ENCODE measurements at regions of chr15 and their contacts with region 1.

Region 1: GRCh38 chr15:28123408-28124023 is 24.4 kb upstream of the OCA2 start:
- DNase-seq: peak in 3 of 5 donors; percentile 20 to 39 (median 21)
- H3K4me3 ChIP-seq: no peak overlapping the region
- H3K4me3 Mint-ChIP-seq: no peak overlapping the region
- H3K27ac ChIP-seq: no peak overlapping the region
- H3K27ac Mint-ChIP-seq: peak overlapping the region in 1 of 7 donors; percentile 88
- H3K4me1 ChIP-seq: no peaks in the 10 kb centered on the region
- H3K4me1 Mint-ChIP-seq: peaks cover 2 to 14% (median 5%) of the 10 kb centered on the region in 4 donors
- H3K27me3 ChIP-seq: no peaks in the 10 kb centered on the region
- H3K27me3 Mint-ChIP-seq: no peaks in the 10 kb centered on the region

Region 2: DNA sequence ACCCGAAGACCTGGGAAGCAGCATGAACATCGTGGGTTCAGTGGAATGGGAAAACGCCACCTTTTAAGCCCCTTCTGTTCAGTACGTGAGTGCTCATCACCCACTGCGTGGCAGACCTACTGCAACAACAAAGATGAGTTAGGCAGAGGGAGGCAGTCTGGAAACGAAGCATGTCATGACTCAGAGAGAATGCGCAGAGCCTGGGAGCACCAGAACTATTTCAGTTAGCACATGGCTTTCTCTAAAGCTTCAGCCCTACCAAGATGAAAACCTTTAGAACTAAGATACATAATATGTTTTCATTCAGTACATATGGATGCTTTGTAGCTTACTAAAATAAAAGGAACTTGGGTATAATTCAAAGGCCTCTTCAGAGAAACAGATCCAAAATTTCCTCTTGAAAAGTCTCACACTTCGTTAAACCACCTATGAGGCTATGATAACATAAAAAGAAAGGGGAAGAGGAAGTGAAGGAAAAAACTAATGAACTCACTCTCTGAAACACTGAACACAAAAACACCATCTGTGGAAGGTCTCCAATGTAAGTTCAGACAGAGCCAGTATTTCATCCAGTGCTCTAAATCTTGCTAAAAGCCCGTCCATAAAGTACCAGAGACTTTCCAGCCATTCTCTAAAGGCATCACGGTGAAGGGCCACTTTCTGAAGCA is 164.5 kb before region 1 on chr15:
- CTCF ChIA-PET with region 1: no interaction called
- POLR2A ChIA-PET with region 1: no interaction called
- intact Hi-C with region 1: no loop called
- DNase-seq: no peak
- H3K4me3 ChIP-seq: no peak overlapping the region
- H3K4me3 Mint-ChIP-seq: no peak overlapping the region
- H3K27ac ChIP-seq: no peak overlapping the region
- H3K27ac Mint-ChIP-seq: no peak overlapping the region
- H3K4me1 ChIP-seq: no peaks in the 10 kb centered on the region
- H3K4me1 Mint-ChIP-seq: no peaks in the 10 kb centered on the region
- H3K27me3 ChIP-seq: no peaks in the 10 kb centered on the region
- H3K27me3 Mint-ChIP-seq: no peaks in the 10 kb centered on the region

Region 3: DNA sequence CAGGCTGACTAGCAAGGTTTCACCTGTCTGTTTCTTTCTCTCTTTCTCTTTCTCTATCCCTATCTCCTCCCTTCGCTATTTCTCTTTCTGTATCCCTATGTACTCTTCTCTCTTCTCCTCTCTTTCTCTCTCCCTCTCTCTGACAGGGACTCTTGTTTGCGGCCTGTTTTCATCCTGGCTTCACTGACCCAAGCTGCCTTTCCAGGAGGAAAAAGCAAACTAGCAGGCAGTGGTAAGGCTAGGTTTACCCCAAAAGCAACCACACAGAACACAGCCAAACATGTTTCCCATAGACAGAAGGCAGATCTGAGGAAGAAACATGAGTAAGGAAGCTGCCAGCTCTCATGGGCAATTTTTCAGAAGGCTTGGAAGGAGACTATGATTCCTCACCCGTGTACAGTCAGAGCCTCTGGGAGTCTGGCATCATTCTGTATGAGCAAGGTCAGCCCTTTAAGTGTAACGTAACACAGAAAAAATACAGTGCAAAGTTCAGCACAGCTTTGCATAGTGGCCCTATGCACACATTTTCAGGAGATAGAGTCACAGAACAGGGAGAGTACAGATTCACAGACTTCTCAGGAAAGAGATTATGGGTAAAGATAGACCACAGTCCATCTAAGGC is 85.4 kb before region 1 on chr15:
- CTCF ChIA-PET with region 1: no interaction called
- POLR2A ChIA-PET with region 1: no interaction called
- intact Hi-C with region 1: no loop called
- DNase-seq: no peak
- H3K4me3 ChIP-seq: no peak overlapping the region
- H3K4me3 Mint-ChIP-seq: no peak overlapping the region
- H3K27ac ChIP-seq: no peak overlapping the region
- H3K27ac Mint-ChIP-seq: no peak overlapping the region
- H3K4me1 ChIP-seq: no peaks in the 10 kb centered on the region
- H3K4me1 Mint-ChIP-seq: no peaks in the 10 kb centered on the region
- H3K27me3 ChIP-seq: no peaks in the 10 kb centered on the region
- H3K27me3 Mint-ChIP-seq: peaks cover 7 to 11% of the 10 kb centered on the region in 2 donors

Region 4: GRCh38 chr15:28091313-28091712 is 32.2 kb before region 1 on chr15:
- CTCF ChIA-PET with region 1: interaction called, 68 read pairs
- POLR2A ChIA-PET with region 1: interaction called, 7 read pairs
- intact Hi-C with region 1: loop called (anchors 1 kb)
- DNase-seq: no peak
- H3K4me3 ChIP-seq: no peak overlapping the region
- H3K4me3 Mint-ChIP-seq: no peak overlapping the region
- H3K27ac ChIP-seq: no peak overlapping the region
- H3K27ac Mint-ChIP-seq: no peak overlapping the region
- H3K4me1 ChIP-seq: peaks cover 23% of the 10 kb centered on the region
- H3K4me1 Mint-ChIP-seq: peaks cover 6 to 21% (median 16%) of the 10 kb centered on the region in 4 donors
- H3K27me3 ChIP-seq: peaks cover 18% of the 10 kb centered on the region
- H3K27me3 Mint-ChIP-seq: peaks cover 48 to 55% of the 10 kb centered on the region in 2 donors

Region 5: GRCh38 chr15:28107111-28107888 is 16.2 kb before region 1 on chr15:
- CTCF ChIA-PET with region 1: interaction called, 44 read pairs
- POLR2A ChIA-PET with region 1: interaction called, 4 read pairs
- intact Hi-C with region 1: no loop called
- DNase-seq: peak in 2 of 5 donors; percentile 31 to 34
- H3K4me3 ChIP-seq: peak overlapping the region; percentile 29 to 68
- H3K4me3 Mint-ChIP-seq: peak overlapping the region; percentile 85 to 94 (median 89)
- H3K27ac ChIP-seq: no peak overlapping the region
- H3K27ac Mint-ChIP-seq: peak overlapping the region in 6 of 7 donors; percentile 48 to 88 (median 58)
- H3K4me1 ChIP-seq: peaks cover 16% of the 10 kb centered on the region
- H3K4me1 Mint-ChIP-seq: peaks cover 8 to 13% (median 12%) of the 10 kb centered on the region in 4 donors
- H3K27me3 ChIP-seq: peaks cover 4% of the 10 kb centered on the region
- H3K27me3 Mint-ChIP-seq: peaks cover 3 to 12% of the 10 kb centered on the region in 2 donors

Region 6: DNA sequence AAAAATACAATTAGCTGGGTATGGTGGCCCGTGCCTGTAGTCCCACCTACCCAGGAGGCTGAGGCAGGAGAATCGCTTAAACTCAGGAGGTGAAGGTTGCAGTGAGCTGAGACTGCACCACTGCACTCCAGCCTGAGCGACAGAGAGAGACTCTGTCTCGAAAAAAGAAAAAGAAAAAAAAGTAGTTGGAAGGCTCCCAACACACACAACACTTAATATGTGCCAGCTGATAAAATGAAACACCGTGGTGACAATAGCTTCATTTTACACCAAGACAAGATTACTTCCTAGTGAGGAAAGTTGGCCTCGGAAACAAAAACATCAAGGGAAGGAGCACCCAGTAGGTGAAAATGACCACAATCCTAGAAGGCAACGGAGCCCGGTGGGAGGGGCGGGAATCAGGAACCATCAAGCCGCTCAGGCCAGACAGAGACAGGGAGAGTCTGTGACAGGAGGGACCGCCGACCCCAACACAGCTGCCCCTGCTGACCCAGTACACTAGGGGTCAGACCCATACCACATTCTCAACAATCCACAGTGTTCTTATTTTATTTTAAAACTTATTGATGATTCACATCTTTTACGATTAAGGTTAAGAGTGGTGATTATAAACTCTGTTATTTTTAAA is 30.1 kb after region 1 on chr15:
- CTCF ChIA-PET with region 1: interaction called, 37 read pairs
- POLR2A ChIA-PET with region 1: interaction called, 4 read pairs
- intact Hi-C with region 1: no loop called
- DNase-seq: no peak
- H3K4me3 ChIP-seq: no peak overlapping the region
- H3K4me3 Mint-ChIP-seq: no peak overlapping the region
- H3K27ac ChIP-seq: no peak overlapping the region
- H3K27ac Mint-ChIP-seq: no peak overlapping the region
- H3K4me1 ChIP-seq: no peaks in the 10 kb centered on the region
- H3K4me1 Mint-ChIP-seq: peaks cover 0 to 26% (median 3%) of the 10 kb centered on the region in 4 donors
- H3K27me3 ChIP-seq: no peaks in the 10 kb centered on the region
- H3K27me3 Mint-ChIP-seq: no peaks in the 10 kb centered on the region

Region 7: DNA sequence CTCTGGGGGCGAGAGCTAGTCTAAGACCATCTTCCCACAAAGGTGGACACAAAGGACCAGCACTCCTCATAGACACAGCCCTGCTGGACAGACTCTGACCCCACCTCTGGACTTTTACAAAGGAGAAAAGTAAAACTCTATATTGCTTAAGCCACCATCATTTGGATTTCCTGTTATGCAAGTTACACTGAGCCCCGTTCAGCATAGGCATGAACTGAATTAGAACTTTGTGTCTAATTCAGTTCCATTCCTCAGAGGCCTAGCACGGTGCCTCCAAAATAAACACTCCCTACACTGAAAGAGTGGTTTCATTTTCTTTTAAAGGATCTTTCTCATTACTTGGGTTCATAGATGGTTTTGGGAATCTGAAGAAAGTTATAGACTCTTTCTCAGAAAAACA is 54.8 kb after region 1 on chr15:
- CTCF ChIA-PET with region 1: interaction called, 11 read pairs
- POLR2A ChIA-PET with region 1: no interaction called
- intact Hi-C with region 1: no loop called
- DNase-seq: no peak
- H3K4me3 ChIP-seq: no peak overlapping the region
- H3K4me3 Mint-ChIP-seq: no peak overlapping the region
- H3K27ac ChIP-seq: no peak overlapping the region
- H3K27ac Mint-ChIP-seq: peak overlapping the region in 1 of 7 donors; percentile 36
- H3K4me1 ChIP-seq: no peaks in the 10 kb centered on the region
- H3K4me1 Mint-ChIP-seq: peaks cover 0 to 7% (median 1%) of the 10 kb centered on the region in 4 donors
- H3K27me3 ChIP-seq: no peaks in the 10 kb centered on the region
- H3K27me3 Mint-ChIP-seq: no peaks in the 10 kb centered on the region

Region 8: GRCh38 chr15:28208583-28208982 is 85.1 kb after region 1 on chr15:
- CTCF ChIA-PET with region 1: interaction called, 33 read pairs
- POLR2A ChIA-PET with region 1: interaction called, 3 read pairs
- intact Hi-C with region 1: no loop called
- DNase-seq: no peak
- H3K4me3 ChIP-seq: no peak overlapping the region
- H3K4me3 Mint-ChIP-seq: no peak overlapping the region
- H3K27ac ChIP-seq: no peak overlapping the region
- H3K27ac Mint-ChIP-seq: peak overlapping the region in 1 of 7 donors; percentile 0
- H3K4me1 ChIP-seq: no peaks in the 10 kb centered on the region
- H3K4me1 Mint-ChIP-seq: peaks cover 0 to 5% (median 0%) of the 10 kb centered on the region in 4 donors
- H3K27me3 ChIP-seq: no peaks in the 10 kb centered on the region
- H3K27me3 Mint-ChIP-seq: no peaks in the 10 kb centered on the region